OCI-LY7 (cell line): ENCODE measurements at regions of chr12 and their contacts with region 1.

Region 1: DNA sequence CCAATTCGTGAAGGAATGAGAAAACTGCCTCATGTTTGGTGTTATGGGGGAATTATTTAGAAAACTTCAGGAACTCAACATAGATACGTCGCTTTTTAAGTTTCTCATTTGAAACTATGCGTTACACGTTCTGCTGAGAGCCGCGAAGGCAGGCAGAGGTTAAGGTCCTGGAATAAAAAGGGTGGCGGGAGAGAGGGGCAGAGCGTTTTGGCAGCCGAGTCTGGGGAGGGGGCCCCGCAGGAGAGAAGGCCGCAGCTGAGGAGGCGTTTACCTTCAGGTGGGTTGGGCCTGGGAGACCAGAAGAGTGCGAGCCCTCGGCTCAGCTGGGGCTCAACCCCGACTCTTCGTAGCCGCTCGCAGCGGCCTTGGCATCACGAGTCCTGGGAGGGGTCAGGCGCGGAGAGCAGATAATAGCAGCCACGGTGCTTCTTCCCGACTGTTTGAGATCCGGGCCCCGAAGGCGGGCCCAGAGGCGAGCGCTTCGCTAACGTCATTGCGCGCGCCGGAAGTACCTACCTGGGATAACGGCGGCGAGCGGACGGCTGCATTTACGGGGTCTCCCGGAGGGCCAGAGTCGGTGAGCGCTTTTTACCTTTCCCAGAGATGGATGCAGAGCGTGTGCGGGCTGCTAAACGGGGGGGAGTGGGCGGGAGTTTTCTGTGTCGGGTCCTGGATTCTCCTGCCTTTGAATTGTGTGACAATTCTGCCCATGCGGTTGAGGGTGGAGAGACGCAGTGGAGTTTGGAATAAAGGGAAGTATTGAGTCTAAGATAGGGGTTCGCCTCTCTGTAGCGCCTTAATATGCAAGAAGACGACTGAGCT is at the starts of genes PPHLN1 and ZCRB1:
- DNase-seq: peak; percentile 89
- H3K4me3 ChIP-seq: peak within 1 kb of the TSS; percentile 95
- H3K27ac ChIP-seq: peak within 1 kb of the TSS; percentile 69
- H3K4me1 ChIP-seq: peaks cover 37% of the 10 kb centered on the region
- CTCF ChIP-seq: no peak
- total RNA-seq, gene PPHLN1: 97.6 and 115 TPM in 2 replicates
- total RNA-seq, gene ZCRB1: 25.7 and 29.7 TPM in 2 replicates

Region 2: DNA sequence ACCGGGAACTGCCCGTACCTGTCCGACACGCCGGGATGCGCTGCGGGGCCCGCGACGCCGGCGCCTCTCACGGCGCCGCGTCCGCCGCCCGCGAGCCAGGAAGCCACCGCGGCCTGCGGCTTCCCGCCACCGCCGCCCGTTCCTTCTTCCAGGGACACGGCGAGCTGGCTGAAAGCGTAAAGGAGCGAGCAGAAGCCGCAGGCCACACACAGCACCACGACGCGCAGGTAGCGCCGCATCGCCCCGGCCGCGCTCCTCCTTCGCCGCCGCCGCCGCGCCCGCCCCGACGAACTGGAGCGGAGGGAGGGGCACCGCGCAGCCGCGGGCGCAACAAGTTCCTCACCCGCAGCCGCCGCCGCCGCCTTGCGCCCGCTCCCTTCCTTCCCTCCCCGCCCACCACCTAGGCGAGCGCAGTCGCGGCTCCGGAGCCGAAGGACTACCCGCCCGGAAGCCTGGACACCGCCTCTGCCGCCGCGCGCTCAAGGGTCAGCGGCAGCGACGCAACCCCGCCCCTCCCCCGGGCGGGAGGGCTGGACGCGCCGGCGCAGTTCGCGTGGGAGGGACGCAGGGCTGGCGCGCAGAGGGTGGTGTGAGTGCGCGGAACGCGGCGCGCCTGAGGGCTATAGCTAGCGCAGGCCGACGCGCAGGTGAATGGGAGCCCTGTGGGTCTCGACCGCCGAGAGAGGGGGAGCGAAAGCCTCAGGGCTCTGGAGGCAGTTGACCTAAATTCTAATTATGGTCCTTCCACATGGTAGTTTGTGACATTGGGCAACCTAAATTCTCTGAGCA is 181.3 kb before region 1 on chr12 and contains the start of gene GXYLT1:
- CTCF ChIA-PET with region 1: no interaction called
- POLR2A ChIA-PET with region 1: interaction called, 4 read pairs
- intact Hi-C with region 1: loop called (anchors 5 kb)
- DNase-seq: peak; percentile 87
- H3K4me3 ChIP-seq: peak within 1 kb of the TSS; percentile 98
- H3K27ac ChIP-seq: peak within 1 kb of the TSS; percentile 49
- H3K4me1 ChIP-seq: peaks cover 23% of the 10 kb centered on the region
- CTCF ChIP-seq: no peak
- total RNA-seq, gene GXYLT1: 7.9 and 9.0 TPM in 2 replicates

Region 3: GRCh38 chr12:42237052-42237852 is 88.6 kb before region 1 on chr12:
- CTCF ChIA-PET with region 1: no interaction called
- POLR2A ChIA-PET with region 1: no interaction called
- intact Hi-C with region 1: loop called (anchors 1 kb)
- DNase-seq: peak; percentile 90
- H3K4me3 ChIP-seq: peak overlapping the region; percentile 79
- H3K27ac ChIP-seq: peak overlapping the region; percentile 61
- H3K4me1 ChIP-seq: peaks cover 24% of the 10 kb centered on the region
- CTCF ChIP-seq: peak; percentile 67